Activated CD8-positive, alpha-beta T cell treated with anti-CD3 and anti-CD28 coated beads for 36 hours (primary cell): ENCODE measurements at regions of chr4 and their contacts with region 1.

Region 1: GRCh38 chr4:121192480-121192879 is 28.4 kb upstream of the TNIP3 start:
- DNase-seq: no peak
- ATAC-seq: peak; percentile 18
- H3K4me3 Mint-ChIP-seq: peak overlapping the region; percentile 31
- H3K27ac Mint-ChIP-seq: no peak overlapping the region
- H3K4me1 Mint-ChIP-seq: peaks cover 52% of the 10 kb centered on the region
- H3K27me3 Mint-ChIP-seq: no peaks in the 10 kb centered on the region
- CTCF ChIP-seq: peak; percentile 89

Region 2: GRCh38 chr4:120769227-120769626 is 423.3 kb before region 1 on chr4:
- CTCF ChIA-PET with region 1: no interaction called
- POLR2A ChIA-PET with region 1: no interaction called
- intact Hi-C with region 1: no loop called
- DNase-seq: no peak
- ATAC-seq: no peak
- H3K4me3 Mint-ChIP-seq: no peak overlapping the region
- H3K27ac Mint-ChIP-seq: no peak overlapping the region
- H3K4me1 Mint-ChIP-seq: no peaks in the 10 kb centered on the region
- H3K27me3 Mint-ChIP-seq: no peaks in the 10 kb centered on the region
- CTCF ChIP-seq: no peak

Region 3: DNA sequence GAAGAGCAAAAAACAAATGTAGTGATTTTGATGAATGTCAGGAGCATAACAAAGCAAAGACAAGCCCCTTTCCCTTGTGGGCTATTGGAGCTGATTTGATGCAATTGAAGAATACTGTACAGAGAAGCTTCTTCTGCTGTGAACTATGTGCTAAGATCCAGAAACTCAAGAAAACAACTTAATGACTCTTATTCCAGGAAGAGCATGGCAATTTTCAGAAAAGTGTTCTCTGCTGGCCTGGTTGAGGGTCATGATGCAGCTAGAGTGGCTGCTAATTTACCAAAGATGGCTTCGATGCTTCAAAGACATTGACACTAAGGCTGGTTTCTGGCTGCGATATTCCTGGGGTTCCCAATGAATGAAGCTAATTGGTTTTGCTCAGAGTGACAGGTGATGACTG is 74.1 kb before region 1 on chr4:
- CTCF ChIA-PET with region 1: interaction called, 28 read pairs
- POLR2A ChIA-PET with region 1: no interaction called
- intact Hi-C with region 1: no loop called
- DNase-seq: no peak
- ATAC-seq: no peak
- H3K4me3 Mint-ChIP-seq: no peak overlapping the region
- H3K27ac Mint-ChIP-seq: no peak overlapping the region
- H3K4me1 Mint-ChIP-seq: peaks cover 31% of the 10 kb centered on the region
- H3K27me3 Mint-ChIP-seq: no peaks in the 10 kb centered on the region
- CTCF ChIP-seq: no peak

Region 4: DNA sequence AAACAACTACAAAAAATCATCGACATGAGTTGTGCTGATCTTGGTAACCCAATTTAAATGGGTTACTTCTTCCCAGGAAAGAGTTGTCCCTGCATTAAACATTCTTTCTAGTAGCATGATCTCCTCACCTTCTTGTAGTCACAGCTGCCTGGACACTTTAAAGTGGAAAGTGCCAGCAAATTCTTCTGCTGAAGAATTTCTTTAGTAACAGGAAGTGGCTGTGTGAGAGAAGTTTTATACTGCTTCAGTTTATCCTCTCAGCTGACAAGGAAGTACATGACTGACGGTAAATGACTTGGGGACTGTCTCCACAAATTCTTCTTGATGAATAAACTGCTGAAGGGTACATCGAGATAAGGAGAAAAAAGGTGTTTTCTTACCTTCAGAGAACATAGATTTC is 10.2 kb before region 1 on chr4:
- CTCF ChIA-PET with region 1: interaction called, 33 read pairs
- POLR2A ChIA-PET with region 1: no interaction called
- intact Hi-C with region 1: no loop called
- DNase-seq: no peak
- ATAC-seq: peak; percentile 63
- H3K4me3 Mint-ChIP-seq: peak overlapping the region; percentile 76
- H3K27ac Mint-ChIP-seq: peak overlapping the region; percentile 89
- H3K4me1 Mint-ChIP-seq: peaks cover 63% of the 10 kb centered on the region
- H3K27me3 Mint-ChIP-seq: no peaks in the 10 kb centered on the region
- CTCF ChIP-seq: no peak

Region 5: DNA sequence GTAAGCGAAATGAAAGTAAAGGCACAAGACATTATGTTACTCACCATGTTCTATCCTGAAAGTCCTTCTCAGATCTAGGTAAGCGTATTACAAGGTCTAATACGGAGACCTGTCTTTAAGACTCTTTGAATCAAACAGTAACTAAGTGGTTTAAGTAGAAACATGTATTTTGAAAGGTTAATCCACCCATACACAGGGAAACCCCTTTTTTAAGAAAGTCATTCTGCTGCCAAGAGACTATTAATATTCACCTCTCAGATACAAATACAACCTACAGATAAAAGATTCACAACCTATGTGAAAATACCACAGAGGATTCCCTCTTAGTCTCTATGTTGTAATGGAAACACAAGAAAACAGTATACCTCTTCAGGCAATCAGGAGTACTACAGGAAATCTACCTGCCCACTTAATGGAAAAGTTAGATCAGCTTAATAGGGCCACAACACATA is 34.9 kb after region 1 on chr4:
- CTCF ChIA-PET with region 1: interaction called, 29 read pairs
- POLR2A ChIA-PET with region 1: no interaction called
- intact Hi-C with region 1: loop called (anchors 5 kb)
- DNase-seq: no peak
- ATAC-seq: peak; percentile 93
- H3K4me3 Mint-ChIP-seq: peak overlapping the region; percentile 58
- H3K27ac Mint-ChIP-seq: peak overlapping the region; percentile 83
- H3K4me1 Mint-ChIP-seq: peaks cover 43% of the 10 kb centered on the region
- H3K27me3 Mint-ChIP-seq: no peaks in the 10 kb centered on the region
- CTCF ChIP-seq: peak; percentile 63

Region 6: GRCh38 chr4:121272526-121272925 is 80.0 kb after region 1 on chr4:
- CTCF ChIA-PET with region 1: interaction called, 16 read pairs
- POLR2A ChIA-PET with region 1: no interaction called
- intact Hi-C with region 1: no loop called
- DNase-seq: no peak
- ATAC-seq: peak; percentile 79
- H3K4me3 Mint-ChIP-seq: no peak overlapping the region
- H3K27ac Mint-ChIP-seq: no peak overlapping the region
- H3K4me1 Mint-ChIP-seq: peaks cover 8% of the 10 kb centered on the region
- H3K27me3 Mint-ChIP-seq: no peaks in the 10 kb centered on the region
- CTCF ChIP-seq: no peak

Region 7: GRCh38 chr4:121324331-121324730 is 131.9 kb after region 1 on chr4:
- CTCF ChIA-PET with region 1: no interaction called
- POLR2A ChIA-PET with region 1: no interaction called
- intact Hi-C with region 1: no loop called
- DNase-seq: no peak
- ATAC-seq: no peak
- H3K4me3 Mint-ChIP-seq: no peak overlapping the region
- H3K27ac Mint-ChIP-seq: no peak overlapping the region
- H3K4me1 Mint-ChIP-seq: no peaks in the 10 kb centered on the region
- H3K27me3 Mint-ChIP-seq: peaks cover 16% of the 10 kb centered on the region
- CTCF ChIP-seq: no peak